ENCODE measurements at regions of chr7 and their contacts with region 1.

Region 1: GRCh38 chr7:107471292-107472070 is 1.6 kb downstream of the GPR22 start:
- DNase-seq: no peak
- H3K4me3 ChIP-seq: peak overlapping the region in 1 of 2 experiments; percentile 19; a peak in 3 of 4 replicates
- H3K27ac ChIP-seq: peak overlapping the region; percentile 39 to 81; a peak in 3 of 4 replicates
- H3K4me1 ChIP-seq: peaks cover 5 to 38% of the 10 kb centered on the region in 2 experiments; a peak in 2 of 4 replicates
- H3K27me3 ChIP-seq: no peaks in the 10 kb centered on the region
- CTCF ChIP-seq: peak; percentile 30; the same call in 1 of the 2 replicates
- EP300 ChIP-seq: no peak
- RAD21 ChIP-seq: no peak

Region 2: DNA sequence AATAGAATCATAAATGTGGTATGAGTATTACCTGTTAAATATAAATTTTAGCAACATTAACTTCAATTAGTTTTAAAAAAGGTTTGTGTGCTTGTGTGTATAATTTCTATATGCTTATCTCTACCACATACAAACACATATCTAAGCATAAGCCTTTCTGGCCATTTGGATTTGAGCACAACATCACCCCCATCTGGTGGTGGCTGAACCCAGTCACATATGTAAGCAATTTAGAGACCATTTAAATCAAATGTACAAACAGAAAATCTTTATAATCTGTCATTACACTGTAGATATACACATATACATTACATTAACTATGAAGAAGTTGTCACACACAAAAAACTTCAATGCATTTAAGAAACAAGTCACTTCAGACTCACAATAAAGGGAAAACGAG is 30.1 kb after region 1 on chr7:
- CTCF ChIA-PET with region 1: interaction called, 23 read pairs
- POLR2A ChIA-PET with region 1: no interaction called
- DNase-seq: peak; percentile 56
- H3K4me3 ChIP-seq: no peak overlapping the region
- H3K27ac ChIP-seq: no peak overlapping the region
- H3K4me1 ChIP-seq: peaks cover 0 to 2% of the 10 kb centered on the region in 2 experiments; a peak in 2 of 4 replicates
- H3K27me3 ChIP-seq: no peaks in the 10 kb centered on the region
- CTCF ChIP-seq: peak; percentile 70
- EP300 ChIP-seq: no peak
- RAD21 ChIP-seq: peak; percentile 83